Activated CD8-positive, alpha-beta T cell treated with anti-CD3 and anti-CD28 coated beads for 36 hours (primary cell): ENCODE measurements at regions of chr12 and their contacts with region 1.

Region 1: DNA sequence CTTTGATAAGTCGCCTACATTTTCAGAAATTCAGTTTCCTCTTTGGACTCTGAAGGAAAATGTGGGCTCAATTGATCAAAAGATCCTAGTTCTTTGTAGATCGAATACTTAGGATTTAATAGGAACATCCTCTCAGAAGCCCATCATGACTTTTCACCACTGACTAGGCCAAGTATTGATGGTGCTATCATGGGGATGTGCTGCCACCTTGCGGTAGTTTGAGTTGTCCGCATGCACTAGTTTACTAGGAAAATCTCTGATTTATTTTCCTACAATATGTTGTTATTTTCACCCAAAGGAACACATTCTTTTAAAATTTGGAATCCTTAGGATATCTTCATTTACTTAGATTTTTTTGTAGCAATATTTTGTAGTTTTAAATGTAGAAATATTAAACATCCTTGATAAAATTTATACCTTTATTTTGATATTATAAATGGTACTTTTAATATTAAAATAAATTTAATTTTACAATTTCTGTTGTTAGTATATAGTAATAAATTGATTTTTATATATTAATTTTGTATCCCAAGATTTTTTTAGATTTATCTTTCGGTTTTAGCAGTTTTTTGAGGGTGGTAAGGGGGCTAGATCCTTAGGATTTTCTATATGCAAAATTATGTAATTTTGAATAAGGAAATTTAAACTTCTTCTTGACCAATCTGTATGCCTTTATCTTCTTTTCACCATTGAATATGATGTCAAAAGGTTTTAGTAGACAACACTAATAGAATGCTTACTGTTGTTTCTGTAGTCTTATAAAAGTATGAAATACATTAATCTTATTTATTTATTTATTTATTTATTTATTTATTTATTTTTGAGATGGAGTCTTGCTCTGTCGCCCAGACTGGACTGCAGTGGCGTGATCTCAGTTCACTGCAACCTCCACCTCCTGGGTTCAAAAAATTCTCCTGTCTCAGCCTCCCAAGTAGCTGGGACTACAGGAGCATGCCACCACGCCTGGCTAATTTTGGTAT is 52.9 kb upstream of the OR9K2 start:
- DNase-seq: peak; percentile 88
- ATAC-seq: peak; percentile 71
- H3K4me3 Mint-ChIP-seq: no peak overlapping the region
- H3K27ac Mint-ChIP-seq: no peak overlapping the region
- H3K4me1 Mint-ChIP-seq: peaks cover 4% of the 10 kb centered on the region
- H3K27me3 Mint-ChIP-seq: peaks cover 20% of the 10 kb centered on the region
- CTCF ChIP-seq: peak; percentile 85

Region 2: GRCh38 chr12:54701940-54702592 is 371.3 kb before region 1 on chr12:
- CTCF ChIA-PET with region 1: interaction called, 43 read pairs
- POLR2A ChIA-PET with region 1: no interaction called
- intact Hi-C with region 1: no loop called
- DNase-seq: peak; percentile 24
- ATAC-seq: peak; percentile 47
- H3K4me3 Mint-ChIP-seq: no peak overlapping the region
- H3K27ac Mint-ChIP-seq: no peak overlapping the region
- H3K4me1 Mint-ChIP-seq: no peaks in the 10 kb centered on the region
- H3K27me3 Mint-ChIP-seq: peaks cover 4% of the 10 kb centered on the region
- CTCF ChIP-seq: peak; percentile 73

Region 3: DNA sequence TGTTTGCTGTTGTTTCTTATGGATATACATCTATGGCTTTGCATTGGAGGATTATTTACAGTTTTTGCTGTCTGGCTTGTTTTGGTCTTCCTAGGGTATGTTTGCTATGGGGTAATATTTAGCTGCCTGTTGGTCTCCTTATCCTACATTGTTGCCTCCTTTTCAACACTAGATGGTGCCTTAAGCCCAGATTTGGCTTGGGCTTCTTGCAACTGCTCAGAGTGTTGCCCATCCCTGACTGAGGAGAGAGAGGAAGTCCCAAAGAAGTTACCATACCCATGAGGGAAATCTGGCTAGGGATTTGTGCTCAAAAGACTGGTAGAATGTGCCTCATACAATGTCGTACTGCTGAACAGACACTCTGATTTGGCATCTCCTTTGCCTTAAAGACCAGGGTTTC is 313.6 kb before region 1 on chr12:
- CTCF ChIA-PET with region 1: interaction called, 36 read pairs
- POLR2A ChIA-PET with region 1: no interaction called
- intact Hi-C with region 1: no loop called
- DNase-seq: peak; percentile 28
- ATAC-seq: no peak
- H3K4me3 Mint-ChIP-seq: no peak overlapping the region
- H3K27ac Mint-ChIP-seq: no peak overlapping the region
- H3K4me1 Mint-ChIP-seq: peaks cover 15% of the 10 kb centered on the region
- H3K27me3 Mint-ChIP-seq: no peaks in the 10 kb centered on the region
- CTCF ChIP-seq: peak; percentile 47

Region 4: DNA sequence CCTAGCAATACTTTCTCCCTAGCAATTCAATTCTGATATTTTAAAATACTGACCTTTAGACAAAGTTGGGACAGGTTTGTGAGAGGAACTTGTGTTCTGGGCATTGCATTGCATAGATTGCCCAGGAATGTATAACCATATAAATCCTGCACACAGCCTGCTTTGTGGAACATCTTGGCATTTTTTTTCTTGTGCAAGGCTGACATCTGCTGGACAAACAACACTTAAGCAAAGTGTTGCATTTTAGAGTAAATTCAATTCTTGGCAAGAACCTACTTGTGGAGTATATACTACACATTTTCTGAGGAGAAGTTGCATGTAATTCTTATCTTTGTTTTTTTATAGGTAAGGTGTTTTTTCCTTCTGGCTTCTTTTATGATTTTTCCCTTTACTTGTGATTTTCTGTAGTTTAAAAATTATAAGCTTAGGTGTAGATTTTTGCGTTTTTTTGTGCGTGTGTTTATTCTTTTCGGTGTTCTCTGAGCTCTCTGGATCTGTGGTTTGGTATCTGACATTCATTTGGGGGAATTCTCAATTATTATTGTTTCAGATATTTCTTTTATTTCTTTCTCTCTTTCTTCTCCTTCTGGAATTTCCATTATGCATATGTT is 115.2 kb before region 1 on chr12:
- CTCF ChIA-PET with region 1: interaction called, 22 read pairs
- POLR2A ChIA-PET with region 1: no interaction called
- intact Hi-C with region 1: no loop called
- DNase-seq: peak; percentile 54
- ATAC-seq: no peak
- H3K4me3 Mint-ChIP-seq: no peak overlapping the region
- H3K27ac Mint-ChIP-seq: peak overlapping the region; percentile 95
- H3K4me1 Mint-ChIP-seq: peaks cover 90% of the 10 kb centered on the region
- H3K27me3 Mint-ChIP-seq: no peaks in the 10 kb centered on the region
- CTCF ChIP-seq: peak; percentile 91

Region 5: DNA sequence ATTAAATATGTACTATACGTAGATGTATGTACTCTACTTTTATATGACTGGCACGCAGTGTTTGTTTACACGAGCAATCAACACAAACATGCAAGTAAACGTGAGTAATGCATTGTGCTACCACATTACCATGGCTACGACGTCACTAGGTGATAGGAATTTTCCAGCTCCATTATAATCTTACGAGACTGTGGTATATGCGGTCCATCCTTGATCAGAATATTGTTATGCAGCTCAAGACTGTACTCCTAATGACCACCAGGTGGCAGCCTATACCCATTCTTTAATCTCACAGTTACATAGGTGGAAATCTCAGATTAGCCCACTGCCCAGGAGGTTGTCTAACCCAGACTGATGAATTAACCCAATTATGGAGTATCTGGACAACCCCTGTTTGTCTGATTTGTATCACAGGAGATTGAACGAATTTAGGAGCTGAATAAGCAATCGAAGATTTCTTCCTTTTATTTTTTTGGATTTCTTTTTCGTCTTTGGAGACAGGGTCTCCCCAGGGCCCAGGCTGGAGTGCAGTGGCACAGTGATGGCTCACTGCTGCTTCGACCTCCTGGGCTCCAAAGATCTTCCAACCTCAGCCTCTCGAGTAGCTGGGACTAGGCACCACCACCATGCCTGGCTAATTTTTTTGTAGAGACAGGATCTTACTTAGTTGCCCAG is 80.0 kb before region 1 on chr12:
- CTCF ChIA-PET with region 1: interaction called, 707 read pairs
- POLR2A ChIA-PET with region 1: interaction called, 15 read pairs
- intact Hi-C with region 1: loop called (anchors 1 kb)
- DNase-seq: peak; percentile 78
- ATAC-seq: peak; percentile 72
- H3K4me3 Mint-ChIP-seq: no peak overlapping the region
- H3K27ac Mint-ChIP-seq: no peak overlapping the region
- H3K4me1 Mint-ChIP-seq: peaks cover 50% of the 10 kb centered on the region
- H3K27me3 Mint-ChIP-seq: no peaks in the 10 kb centered on the region
- CTCF ChIP-seq: peak; percentile 91

Region 6: GRCh38 chr12:55051197-55051933 is 22.0 kb before region 1 on chr12:
- CTCF ChIA-PET with region 1: interaction called, 16 read pairs
- POLR2A ChIA-PET with region 1: no interaction called
- intact Hi-C with region 1: no loop called
- DNase-seq: no peak
- ATAC-seq: no peak
- H3K4me3 Mint-ChIP-seq: no peak overlapping the region
- H3K27ac Mint-ChIP-seq: no peak overlapping the region
- H3K4me1 Mint-ChIP-seq: no peaks in the 10 kb centered on the region
- H3K27me3 Mint-ChIP-seq: no peaks in the 10 kb centered on the region
- CTCF ChIP-seq: no peak